Left lung (tissue), 14 donors: ENCODE measurements at regions of chr5 and their contacts with region 1.

Region 1: DNA sequence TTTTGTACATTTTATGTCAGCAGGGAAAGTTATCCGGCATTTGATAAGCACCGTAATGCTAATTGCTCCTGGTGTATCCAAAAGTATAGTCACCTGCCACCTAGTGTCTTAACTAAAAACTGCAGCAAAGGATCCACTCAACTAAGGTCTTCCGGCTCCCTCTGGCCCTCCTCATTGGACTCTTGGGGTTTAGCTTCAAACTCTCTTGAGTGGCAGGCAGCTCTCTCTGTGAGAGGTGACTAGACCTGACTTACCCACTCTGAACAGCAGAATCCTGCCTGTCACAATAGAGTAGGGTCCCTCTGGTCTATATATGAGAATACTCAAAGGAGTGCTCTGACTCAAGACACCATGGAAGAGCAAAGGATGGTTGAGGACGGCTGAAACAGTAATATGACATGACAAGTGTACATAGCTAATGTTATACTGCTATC is 60.3 kb upstream of the CAST start:
- DNase-seq: peak in 2 of 4 donors; percentile 49 to 67
- ATAC-seq: peak; percentile 93
- H3K4me3 ChIP-seq: no peak overlapping the region
- H3K27ac ChIP-seq: no peak overlapping the region
- H3K4me1 ChIP-seq: no peaks in the 10 kb centered on the region
- H3K27me3 ChIP-seq: no peaks in the 10 kb centered on the region
- CTCF ChIP-seq: peak; percentile 75 to 83

Region 2: DNA sequence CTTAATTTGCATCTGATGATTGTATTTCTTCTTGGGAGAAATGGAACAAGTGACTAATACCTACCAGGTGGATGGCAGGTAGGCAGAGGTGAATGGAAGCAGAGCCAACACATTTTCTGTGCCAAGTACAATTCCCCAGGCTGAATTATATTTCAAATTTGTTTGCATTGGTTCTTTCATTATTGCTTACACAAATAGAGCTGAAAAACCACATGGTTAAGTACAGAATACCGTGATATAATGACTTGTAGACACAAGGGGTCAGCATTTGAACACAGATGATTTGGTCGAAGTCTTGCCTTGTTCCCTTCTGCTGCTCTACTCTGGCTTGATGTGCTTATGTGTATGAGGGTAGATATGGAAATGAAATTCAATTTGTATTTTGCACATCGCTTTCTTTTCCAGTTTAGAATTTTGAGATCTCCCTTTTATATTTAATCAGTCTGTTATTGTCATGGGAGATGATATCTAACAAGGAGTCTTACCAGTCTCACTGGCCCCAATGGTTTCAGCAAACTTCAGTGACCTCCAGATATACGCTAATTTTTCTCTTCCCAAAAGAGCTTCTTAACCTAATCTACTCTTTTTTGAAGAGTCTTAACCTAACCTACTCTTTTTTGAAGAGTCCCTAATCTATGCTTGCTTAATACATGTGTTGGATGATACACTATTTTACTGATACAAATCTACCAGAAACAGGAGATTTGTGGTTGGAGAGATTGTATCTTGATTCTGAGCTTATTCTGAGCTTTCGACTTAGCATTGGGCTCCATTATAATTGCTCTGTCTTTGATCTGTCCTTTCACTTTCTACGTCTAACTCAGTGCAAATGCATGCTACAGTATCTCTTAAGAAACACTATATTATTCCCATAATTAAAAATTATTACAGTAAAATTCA is 256.9 kb before region 1 on chr5:
- intact Hi-C with region 1: loop called in 1 of 2 experiments (anchors 5 kb)
- DNase-seq: peak in 2 of 4 donors; percentile 32 to 64
- ATAC-seq: peak; percentile 97
- H3K4me3 ChIP-seq: no peak overlapping the region
- H3K27ac ChIP-seq: no peak overlapping the region
- H3K4me1 ChIP-seq: peaks cover 0 to 6% of the 10 kb centered on the region in 2 donors
- H3K27me3 ChIP-seq: no peaks in the 10 kb centered on the region
- CTCF ChIP-seq: peak; percentile 29 to 35